MCF 10A (cell line): ENCODE measurements at regions of chr1 and their contacts with region 1.

Region 1: DNA sequence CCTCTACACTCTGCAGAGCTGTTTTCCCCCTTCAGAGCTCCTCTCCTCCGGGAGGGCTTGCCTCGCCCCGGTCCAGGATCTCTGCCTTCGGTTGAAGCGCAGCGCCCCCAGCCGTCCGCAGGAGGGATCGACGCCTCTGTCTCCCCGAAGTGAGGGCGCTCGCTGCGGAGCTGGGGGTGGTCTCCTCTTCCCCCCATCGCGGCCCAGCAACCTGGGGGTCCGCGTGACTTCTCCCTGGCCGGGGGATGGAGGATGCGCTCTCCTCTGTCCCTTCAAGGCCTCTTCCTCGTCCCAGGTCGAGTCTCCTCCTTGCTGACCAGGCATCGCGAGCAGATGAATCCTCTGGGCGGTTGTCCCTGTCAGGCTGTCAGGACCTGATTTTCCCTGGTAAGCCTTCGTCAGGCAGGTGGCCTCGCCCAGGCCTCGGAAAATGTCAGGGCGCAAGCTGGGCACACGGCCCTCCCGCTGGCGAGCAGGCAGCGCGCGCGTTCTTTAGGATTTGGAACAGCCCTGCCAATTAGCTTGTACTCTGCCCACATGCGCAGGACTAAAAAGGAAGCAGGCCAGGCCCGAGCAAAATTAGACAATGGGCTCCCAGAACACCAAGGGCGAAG is 90.5 kb downstream of the EDEM3 start:
- DNase-seq: peak; percentile 79
- H3K4me3 Mint-ChIP-seq: peak overlapping the region; percentile 74
- H3K27ac Mint-ChIP-seq: peak overlapping the region; percentile 67
- H3K4me1 Mint-ChIP-seq: peaks cover 29% of the 10 kb centered on the region
- H3K27me3 Mint-ChIP-seq: no peaks in the 10 kb centered on the region
- CTCF ChIP-seq: peak; percentile 99

Region 2: DNA sequence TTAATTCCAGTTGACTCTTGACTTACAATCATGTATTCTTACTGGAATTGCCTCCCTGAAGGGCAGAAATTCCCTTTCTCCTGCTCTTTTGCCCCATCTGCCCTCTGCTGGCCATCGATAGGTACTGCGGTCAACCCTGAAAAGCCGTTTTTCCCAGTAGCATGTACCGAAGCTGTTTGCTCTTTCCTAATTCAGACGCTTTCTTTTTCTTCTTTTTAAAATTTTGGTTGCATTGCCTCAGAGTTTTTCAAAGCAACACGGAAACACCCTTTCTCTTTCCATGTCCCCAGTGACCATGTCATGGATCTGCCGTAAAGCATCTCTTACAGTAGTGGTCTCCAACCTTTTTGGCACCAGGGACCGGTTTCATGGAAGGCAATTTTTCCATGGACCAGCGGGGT is 441.5 kb before region 1 on chr1:
- CTCF ChIA-PET with region 1: interaction called, 14 read pairs
- POLR2A ChIA-PET with region 1: no interaction called
- intact Hi-C with region 1: loop called (anchors 1 kb)
- DNase-seq: peak; percentile 77
- H3K4me3 Mint-ChIP-seq: peak overlapping the region; percentile 12
- H3K27ac Mint-ChIP-seq: no peak overlapping the region
- H3K4me1 Mint-ChIP-seq: peaks cover 5% of the 10 kb centered on the region
- H3K27me3 Mint-ChIP-seq: peaks cover 15% of the 10 kb centered on the region
- CTCF ChIP-seq: peak; percentile 93

Region 3: DNA sequence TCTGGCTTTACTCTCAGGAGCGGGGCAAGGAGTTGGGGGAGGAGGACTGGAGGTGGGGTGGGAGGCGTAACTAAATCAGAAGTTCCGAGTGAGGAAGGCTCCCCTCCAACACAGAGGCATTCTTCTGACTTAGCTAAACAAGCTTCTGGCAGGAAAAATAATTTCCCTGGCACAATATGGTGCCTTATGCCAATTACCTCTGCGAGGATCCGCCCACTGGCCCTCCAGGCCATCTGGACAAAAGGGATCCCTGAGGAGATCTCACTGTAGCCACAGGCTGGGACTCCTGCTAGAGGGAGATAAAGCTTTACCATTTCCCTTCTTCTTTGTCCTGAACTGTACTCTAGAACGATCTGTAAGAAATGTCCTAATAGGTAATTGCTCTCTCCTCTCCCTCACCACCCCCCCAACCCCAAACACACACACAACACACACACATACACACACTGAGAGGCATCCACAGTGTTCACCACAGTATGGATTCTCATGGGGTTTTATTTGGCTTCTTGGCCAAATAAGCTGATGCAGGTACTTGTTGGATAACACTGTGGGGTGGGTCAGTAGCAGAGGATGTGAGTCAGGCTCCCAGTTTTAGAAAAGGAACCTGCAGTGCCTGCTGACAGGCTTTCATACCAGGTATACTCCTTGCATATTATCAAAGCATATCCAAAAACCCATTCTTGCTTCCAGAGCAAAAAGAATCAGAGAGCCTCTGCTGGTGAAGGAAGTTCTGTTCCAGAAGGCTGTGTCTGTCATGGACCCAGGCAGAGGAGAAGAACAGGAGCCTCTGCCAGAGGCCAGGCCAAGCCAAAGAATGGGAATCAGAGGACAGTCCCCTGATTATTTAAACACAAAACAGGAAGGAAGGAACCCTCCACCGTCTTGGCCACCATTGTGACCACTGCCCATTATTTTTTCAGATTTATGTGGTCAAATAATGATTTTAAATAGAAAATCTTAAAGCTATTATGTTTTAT is 108.2 kb before region 1 on chr1:
- CTCF ChIA-PET with region 1: interaction called, 12 read pairs
- POLR2A ChIA-PET with region 1: interaction called, 3 read pairs
- intact Hi-C with region 1: no loop called
- DNase-seq: peak; percentile 52
- H3K4me3 Mint-ChIP-seq: no peak overlapping the region
- H3K27ac Mint-ChIP-seq: peak overlapping the region; percentile 91
- H3K4me1 Mint-ChIP-seq: peaks cover 41% of the 10 kb centered on the region
- H3K27me3 Mint-ChIP-seq: no peaks in the 10 kb centered on the region
- CTCF ChIP-seq: no peak

Region 4: GRCh38 chr1:184595591-184595990 is 68.6 kb before region 1 on chr1:
- CTCF ChIA-PET with region 1: interaction called, 14 read pairs
- POLR2A ChIA-PET with region 1: no interaction called
- intact Hi-C with region 1: no loop called
- DNase-seq: peak; percentile 85
- H3K4me3 Mint-ChIP-seq: no peak overlapping the region
- H3K27ac Mint-ChIP-seq: peak overlapping the region; percentile 3
- H3K4me1 Mint-ChIP-seq: peaks cover 30% of the 10 kb centered on the region
- H3K27me3 Mint-ChIP-seq: no peaks in the 10 kb centered on the region
- CTCF ChIP-seq: no peak

Region 5: DNA sequence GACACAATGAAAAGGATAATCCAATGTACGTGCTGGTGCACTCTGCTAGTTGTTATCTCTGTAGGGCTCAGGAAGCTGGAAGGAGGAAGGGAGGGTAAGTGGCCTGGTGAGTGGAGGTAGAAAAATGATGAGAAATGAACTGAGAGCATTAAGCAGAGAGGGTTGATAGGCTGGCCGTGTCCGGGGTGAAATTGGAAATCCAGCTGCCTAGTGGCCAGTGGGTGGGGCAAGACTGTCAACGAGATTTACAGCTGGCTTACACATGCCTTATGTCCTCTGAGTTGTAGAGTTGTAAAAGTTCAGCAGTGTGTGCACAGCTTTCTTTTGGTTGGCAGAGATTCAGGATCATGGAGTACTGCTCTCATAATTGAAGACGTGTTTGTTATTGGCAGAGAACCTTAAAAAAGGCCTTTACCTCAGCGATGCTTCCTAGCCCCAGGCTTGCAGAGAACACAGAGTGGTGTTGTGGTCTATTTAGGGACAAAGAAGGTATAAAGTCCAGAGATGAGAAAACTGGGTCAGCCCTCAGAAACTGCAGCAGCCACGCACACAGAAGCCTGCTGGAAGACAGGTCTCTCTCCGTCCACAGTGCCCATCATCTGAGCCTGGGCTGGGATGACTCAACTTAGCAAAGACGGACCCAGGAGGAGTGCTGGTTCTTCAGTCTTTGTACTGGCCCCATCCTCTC is 41.9 kb before region 1 on chr1:
- CTCF ChIA-PET with region 1: interaction called, 14 read pairs
- POLR2A ChIA-PET with region 1: interaction called, 5 read pairs
- intact Hi-C with region 1: loop called (anchors 2 kb)
- DNase-seq: peak; percentile 98
- H3K4me3 Mint-ChIP-seq: peak overlapping the region; percentile 42
- H3K27ac Mint-ChIP-seq: peak overlapping the region; percentile 74
- H3K4me1 Mint-ChIP-seq: peaks cover 64% of the 10 kb centered on the region
- H3K27me3 Mint-ChIP-seq: no peaks in the 10 kb centered on the region
- CTCF ChIP-seq: no peak

Region 6: GRCh38 chr1:184640505-184640904 is 23.6 kb before region 1 on chr1:
- CTCF ChIA-PET with region 1: interaction called, 13 read pairs
- POLR2A ChIA-PET with region 1: no interaction called
- intact Hi-C with region 1: no loop called
- DNase-seq: no peak
- H3K4me3 Mint-ChIP-seq: no peak overlapping the region
- H3K27ac Mint-ChIP-seq: no peak overlapping the region
- H3K4me1 Mint-ChIP-seq: peaks cover 8% of the 10 kb centered on the region
- H3K27me3 Mint-ChIP-seq: no peaks in the 10 kb centered on the region
- CTCF ChIP-seq: no peak

Region 7: DNA sequence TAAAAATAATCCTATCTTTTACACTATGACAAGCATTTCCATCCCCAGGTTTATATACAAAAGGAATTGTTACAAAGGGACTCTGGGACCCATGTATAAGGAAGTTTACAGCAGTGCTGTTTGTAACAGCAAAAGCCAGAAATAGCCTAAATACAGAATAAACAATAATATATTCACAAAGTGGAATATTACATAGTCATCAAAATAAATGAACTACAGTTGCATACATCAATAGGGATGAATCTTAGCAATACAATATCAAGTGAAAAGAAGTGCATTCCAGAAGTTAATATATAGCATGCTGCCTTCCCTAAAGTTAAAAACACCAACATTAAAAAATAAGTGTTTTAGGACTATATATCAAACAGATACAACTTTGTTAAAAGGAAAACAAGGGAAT is 13.2 kb after region 1 on chr1:
- CTCF ChIA-PET with region 1: interaction called, 25 read pairs
- POLR2A ChIA-PET with region 1: interaction called, 3 read pairs
- intact Hi-C with region 1: no loop called
- DNase-seq: no peak
- H3K4me3 Mint-ChIP-seq: no peak overlapping the region
- H3K27ac Mint-ChIP-seq: no peak overlapping the region
- H3K4me1 Mint-ChIP-seq: no peaks in the 10 kb centered on the region
- H3K27me3 Mint-ChIP-seq: no peaks in the 10 kb centered on the region
- CTCF ChIP-seq: no peak

Region 8: GRCh38 chr1:184905474-184905894 is 241.3 kb after region 1 on chr1:
- CTCF ChIA-PET with region 1: no interaction called
- POLR2A ChIA-PET with region 1: no interaction called
- intact Hi-C with region 1: no loop called
- DNase-seq: no peak
- H3K4me3 Mint-ChIP-seq: no peak overlapping the region
- H3K27ac Mint-ChIP-seq: no peak overlapping the region
- H3K4me1 Mint-ChIP-seq: peaks cover 8% of the 10 kb centered on the region
- H3K27me3 Mint-ChIP-seq: peaks cover 95% of the 10 kb centered on the region
- CTCF ChIP-seq: no peak